ENCODE measurements at regions of chr20 and their contacts with region 1.

Region 1: GRCh38 chr20:50540620-50541605 is 30.7 kb downstream of the PTPN1 start:
- DNase-seq: no peak
- CTCF ChIP-seq: no peak

Region 2: DNA sequence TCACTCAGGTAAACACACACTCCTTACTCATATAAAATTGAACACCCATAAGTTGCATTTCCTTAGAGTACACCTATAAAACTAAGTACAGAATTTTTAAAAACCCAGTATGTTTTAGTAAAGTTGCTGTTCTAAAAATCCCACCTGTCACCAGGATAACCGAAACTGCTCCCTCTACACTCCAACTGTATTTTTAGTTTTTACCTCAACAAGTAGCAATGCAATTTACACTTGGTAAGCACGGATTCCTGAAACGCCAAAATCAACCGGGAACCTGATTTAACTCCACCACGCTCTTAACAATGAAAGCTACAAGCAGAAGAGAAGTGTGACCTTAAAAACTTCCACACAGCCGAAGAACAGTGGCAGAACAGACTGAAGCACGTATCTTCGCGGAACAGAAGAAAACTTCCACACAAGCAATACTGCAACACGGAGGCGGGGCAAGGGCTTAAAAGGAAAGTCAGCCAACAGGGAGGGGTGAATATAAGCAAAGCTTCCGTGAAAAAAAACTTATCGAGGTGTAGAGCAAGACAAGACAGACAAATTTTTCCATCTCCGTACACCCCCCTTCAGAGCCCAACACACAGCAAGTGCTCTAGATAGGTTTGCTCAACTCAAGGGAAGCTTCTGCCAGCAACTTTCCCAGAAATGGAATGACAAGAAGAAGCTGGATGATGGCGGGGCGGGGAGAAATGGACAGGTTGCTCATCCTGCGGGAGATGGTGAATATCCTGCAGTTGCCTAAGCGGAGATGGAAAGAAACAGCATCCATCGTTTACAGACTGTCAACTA is 1354.2 kb before region 1 on chr20:
- CTCF ChIA-PET with region 1: no interaction called
- POLR2A ChIA-PET with region 1: interaction called, 10 read pairs
- DNase-seq: peak; percentile 63
- CTCF ChIP-seq: no peak

Region 3: GRCh38 chr20:50312682-50313189 is 228.2 kb before region 1 on chr20:
- CTCF ChIA-PET with region 1: no interaction called
- POLR2A ChIA-PET with region 1: no interaction called
- DNase-seq: no peak
- CTCF ChIP-seq: no peak

Region 4: DNA sequence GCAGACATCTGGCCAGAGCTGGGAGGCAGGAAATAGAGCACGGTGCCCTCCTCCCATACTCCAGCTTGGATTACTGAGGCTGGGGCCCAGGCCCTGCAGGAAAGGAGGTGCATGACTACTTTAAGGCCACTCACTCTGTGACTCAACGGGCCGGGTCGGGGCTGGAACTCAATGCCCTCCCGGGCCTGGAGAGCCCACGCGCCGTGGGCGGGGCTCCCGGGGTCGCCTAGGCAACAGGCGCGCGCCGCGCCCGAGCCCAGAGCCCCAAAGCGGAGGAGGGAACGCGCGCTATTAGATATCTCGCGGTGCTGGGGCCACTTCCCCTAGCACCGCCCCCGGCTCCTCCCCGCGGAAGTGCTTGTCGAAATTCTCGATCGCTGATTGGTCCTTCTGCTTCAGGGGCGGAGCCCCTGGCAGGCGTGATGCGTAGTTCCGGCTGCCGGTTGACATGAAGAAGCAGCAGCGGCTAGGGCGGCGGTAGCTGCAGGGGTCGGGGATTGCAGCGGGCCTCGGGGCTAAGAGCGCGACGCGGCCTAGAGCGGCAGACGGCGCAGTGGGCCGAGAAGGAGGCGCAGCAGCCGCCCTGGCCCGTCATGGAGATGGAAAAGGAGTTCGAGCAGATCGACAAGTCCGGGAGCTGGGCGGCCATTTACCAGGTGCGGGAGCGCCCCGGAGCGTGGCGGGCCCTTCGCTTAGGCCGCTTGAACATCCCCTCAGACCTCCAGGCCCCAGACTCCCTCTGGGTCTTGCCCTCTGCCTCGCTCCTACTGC is 30.8 kb before region 1 on chr20 and contains the start of gene PTPN1:
- CTCF ChIA-PET with region 1: interaction called, 14 read pairs
- POLR2A ChIA-PET with region 1: no interaction called
- DNase-seq: peak; percentile 96
- CTCF ChIP-seq: no peak

Region 5: GRCh38 chr20:50523552-50524167 is 17.3 kb before region 1 on chr20:
- CTCF ChIA-PET with region 1: interaction called, 12 read pairs
- POLR2A ChIA-PET with region 1: interaction called, 3 read pairs
- DNase-seq: no peak
- CTCF ChIP-seq: no peak

Region 6: DNA sequence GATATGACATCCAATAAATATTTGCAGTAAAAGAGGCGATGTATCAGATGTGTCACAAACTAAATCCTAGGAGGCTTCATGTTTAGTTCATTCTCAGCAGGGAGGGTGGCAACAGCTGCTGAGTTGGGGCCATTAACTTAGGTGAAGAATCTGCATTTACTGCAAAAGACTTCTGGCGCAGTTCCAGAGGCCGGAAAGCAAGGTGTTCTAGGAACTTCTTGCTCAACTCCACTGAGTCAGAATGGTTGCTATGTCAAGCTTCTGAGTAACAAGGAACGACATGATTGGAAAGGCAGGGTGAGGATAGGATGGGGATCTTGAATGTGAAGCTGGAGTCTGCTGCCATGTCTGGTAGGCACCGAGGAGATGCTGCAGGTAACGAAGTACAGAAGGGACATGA is 378.7 kb after region 1 on chr20:
- CTCF ChIA-PET with region 1: no interaction called
- POLR2A ChIA-PET with region 1: no interaction called
- DNase-seq: no peak
- CTCF ChIP-seq: no peak